ENCODE measurements at regions of chr6 and their contacts with region 1.

Region 1: DNA sequence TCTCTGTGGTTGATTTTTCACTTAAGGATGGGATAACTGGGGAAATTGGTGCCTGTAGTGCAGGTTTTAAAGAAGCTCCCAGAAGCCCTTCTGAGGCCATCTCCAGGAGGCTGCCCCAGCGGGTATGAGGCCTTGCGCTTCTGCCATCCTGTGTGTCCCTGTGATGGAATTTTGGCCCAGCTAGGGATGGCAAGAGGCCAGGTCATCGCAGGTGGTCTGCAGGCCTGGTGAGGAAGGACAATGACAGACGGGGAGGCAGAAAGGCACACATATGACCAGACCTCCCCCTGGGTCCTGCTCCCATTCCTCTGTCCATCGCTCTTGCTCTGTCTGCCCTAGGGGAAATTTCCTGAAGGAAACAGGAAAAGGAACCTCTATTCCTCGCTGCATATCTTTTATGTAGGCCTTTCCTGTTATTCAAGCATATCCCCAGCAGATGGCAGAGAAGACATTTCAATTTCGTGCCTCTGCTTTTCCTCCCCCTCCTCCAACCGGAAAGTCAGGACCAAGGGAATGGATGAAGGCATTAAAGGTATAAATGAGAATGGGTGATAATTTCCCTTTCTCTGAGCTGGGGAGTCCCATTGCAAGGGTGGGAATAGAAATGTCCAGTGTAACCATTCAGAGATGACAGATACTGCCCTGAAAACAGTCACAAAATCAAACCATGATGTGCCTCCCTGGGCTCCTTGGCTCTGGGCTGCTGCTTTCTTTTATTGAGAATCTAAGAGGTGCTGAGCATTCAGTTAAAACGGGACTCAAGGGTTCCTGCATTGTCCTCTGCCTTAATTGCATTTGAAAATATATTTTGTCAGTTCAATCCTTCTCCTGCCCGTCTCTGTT is 17.6 kb upstream of the HLA-F start:
- DNase-seq: no peak
- ATAC-seq: no peak
- H3K4me3 Mint-ChIP-seq: no peak overlapping the region
- H3K27ac Mint-ChIP-seq: no peak overlapping the region
- H3K4me1 Mint-ChIP-seq: peaks cover 51% of the 10 kb centered on the region
- H3K27me3 Mint-ChIP-seq: peaks cover 16% of the 10 kb centered on the region
- CTCF ChIP-seq: peak; percentile 79

Region 2: GRCh38 chr6:29724937-29725869 is 19.6 kb after region 1 on chr6:
- CTCF ChIA-PET with region 1: interaction called, 11 read pairs
- POLR2A ChIA-PET with region 1: interaction called, 4 read pairs
- intact Hi-C with region 1: no loop called
- DNase-seq: no peak
- ATAC-seq: no peak
- H3K4me3 Mint-ChIP-seq: peak overlapping the region; percentile 93
- H3K27ac Mint-ChIP-seq: peak overlapping the region; percentile 94
- H3K4me1 Mint-ChIP-seq: peaks cover 66% of the 10 kb centered on the region
- H3K27me3 Mint-ChIP-seq: no peaks in the 10 kb centered on the region
- CTCF ChIP-seq: no peak

Region 3: GRCh38 chr6:29737707-29738630 is 32.4 kb after region 1 on chr6:
- CTCF ChIA-PET with region 1: interaction called, 18 read pairs
- POLR2A ChIA-PET with region 1: interaction called, 5 read pairs
- intact Hi-C with region 1: no loop called
- DNase-seq: peak; percentile 83
- ATAC-seq: peak; percentile 85
- H3K4me3 Mint-ChIP-seq: no peak overlapping the region
- H3K27ac Mint-ChIP-seq: no peak overlapping the region
- H3K4me1 Mint-ChIP-seq: peaks cover 11% of the 10 kb centered on the region
- H3K27me3 Mint-ChIP-seq: no peaks in the 10 kb centered on the region
- CTCF ChIP-seq: peak; percentile 84

Region 4: GRCh38 chr6:29752451-29753308 is 47.1 kb after region 1 on chr6:
- CTCF ChIA-PET with region 1: interaction called, 70 read pairs
- POLR2A ChIA-PET with region 1: interaction called, 6 read pairs
- intact Hi-C with region 1: loop called (anchors 5 kb)
- DNase-seq: peak; percentile 91
- ATAC-seq: peak; percentile 77
- H3K4me3 Mint-ChIP-seq: peak overlapping the region; percentile 89
- H3K27ac Mint-ChIP-seq: peak overlapping the region; percentile 92
- H3K4me1 Mint-ChIP-seq: peaks cover 30% of the 10 kb centered on the region
- H3K27me3 Mint-ChIP-seq: no peaks in the 10 kb centered on the region
- CTCF ChIP-seq: peak; percentile 99

Region 5: DNA sequence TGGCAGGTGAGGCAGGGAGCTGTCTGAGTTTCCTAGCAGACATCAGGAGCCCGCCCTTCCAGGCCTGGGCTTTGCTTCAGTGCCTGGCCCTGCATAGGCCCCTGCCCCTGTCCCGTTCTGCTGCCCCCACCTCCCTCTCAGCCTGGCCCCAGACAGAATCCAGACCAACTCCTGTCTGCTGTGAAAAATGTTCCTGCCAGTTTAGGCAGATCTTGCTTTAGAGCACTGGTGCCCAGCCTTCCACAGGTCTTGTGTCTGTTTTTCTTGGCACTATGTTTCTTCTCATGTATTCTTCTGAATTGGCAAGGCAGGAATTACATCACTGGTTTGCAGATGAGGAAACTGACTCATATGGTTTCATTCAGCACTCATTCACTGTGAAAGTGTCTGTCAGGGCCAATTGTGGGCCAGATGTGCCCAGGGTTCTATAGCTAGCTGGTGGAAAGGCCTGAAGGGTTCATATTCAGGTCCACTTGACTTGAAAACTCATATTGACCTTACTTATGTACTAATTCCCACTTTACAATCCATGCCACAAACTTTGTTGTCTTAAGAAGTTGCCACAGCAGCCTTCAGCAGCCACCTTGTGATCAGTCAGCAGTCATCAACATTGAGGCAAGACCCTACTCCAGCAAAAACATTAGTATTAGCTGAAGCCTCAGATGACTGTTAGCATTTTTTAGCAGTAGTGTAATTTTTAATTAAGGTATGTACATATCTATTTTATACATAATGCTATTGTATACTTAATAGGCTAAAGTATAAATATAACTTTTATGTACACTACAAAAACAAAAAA is 58.1 kb after region 1 on chr6:
- CTCF ChIA-PET with region 1: interaction called, 11 read pairs
- POLR2A ChIA-PET with region 1: interaction called, 4 read pairs
- intact Hi-C with region 1: no loop called
- DNase-seq: peak; percentile 55
- ATAC-seq: peak; percentile 93
- H3K4me3 Mint-ChIP-seq: no peak overlapping the region
- H3K27ac Mint-ChIP-seq: peak overlapping the region; percentile 39
- H3K4me1 Mint-ChIP-seq: peaks cover 15% of the 10 kb centered on the region
- H3K27me3 Mint-ChIP-seq: peaks cover 6% of the 10 kb centered on the region
- CTCF ChIP-seq: no peak

Region 6: GRCh38 chr6:29834564-29835436 is 129.2 kb after region 1 on chr6:
- CTCF ChIA-PET with region 1: interaction called, 42 read pairs
- POLR2A ChIA-PET with region 1: interaction called, 5 read pairs
- intact Hi-C with region 1: loop called (anchors 2 kb)
- DNase-seq: peak; percentile 63
- ATAC-seq: peak; percentile 45
- H3K4me3 Mint-ChIP-seq: no peak overlapping the region
- H3K27ac Mint-ChIP-seq: no peak overlapping the region
- H3K4me1 Mint-ChIP-seq: no peaks in the 10 kb centered on the region
- H3K27me3 Mint-ChIP-seq: peaks cover 44% of the 10 kb centered on the region
- CTCF ChIP-seq: peak; percentile 95

Measured in activated CD8-positive, alpha-beta T cell treated with anti-CD3 and anti-CD28 coated beads for 36 hours (primary cell).